CD8-positive, alpha-beta memory T cell (primary cell): ENCODE measurements at regions of chr2 and their contacts with region 1.

Region 1: DNA sequence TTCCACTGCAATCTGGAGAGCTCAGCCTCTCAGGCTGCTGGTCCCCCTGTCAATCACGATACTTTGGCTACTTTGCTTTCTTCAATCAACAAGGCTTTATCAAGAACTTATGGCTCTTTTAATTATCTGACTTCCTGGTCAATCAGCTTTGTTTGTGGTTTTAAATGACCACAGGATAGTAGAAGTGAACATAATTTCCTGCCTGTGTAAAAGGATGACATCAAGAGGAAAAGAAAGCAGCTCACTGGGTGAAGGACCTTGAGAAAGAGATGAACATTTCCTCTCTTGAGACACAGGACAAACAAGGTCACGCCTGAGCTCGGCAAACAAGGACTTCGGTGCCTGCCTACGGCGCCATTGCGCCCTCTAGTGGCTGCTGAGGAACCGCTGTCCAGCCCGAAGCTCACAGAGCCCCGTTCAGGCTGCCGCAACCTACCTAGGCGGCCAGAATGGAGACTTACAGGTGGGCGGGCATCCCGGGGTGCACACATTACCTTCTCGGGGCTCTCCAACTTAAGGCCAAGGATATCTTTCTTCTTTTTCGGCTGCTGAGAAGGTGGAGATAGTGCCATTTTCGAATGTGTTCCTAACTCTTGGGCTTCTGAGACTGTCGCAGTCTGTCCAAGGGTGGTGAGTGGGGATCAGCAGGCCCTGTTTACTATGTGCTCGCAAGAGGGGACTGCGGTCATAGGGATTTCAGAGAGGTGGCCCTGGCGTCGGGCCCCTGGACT is 54.0 kb downstream of the IL1RL2 start:
- DNase-seq: peak; percentile 72 to 89 (median 77)
- H3K4me3 ChIP-seq: no peak overlapping the region
- H3K4me3 Mint-ChIP-seq: peak overlapping the region in 6 of 7 donors; percentile 29 to 69 (median 36)
- H3K27ac ChIP-seq: no peak overlapping the region
- H3K27ac Mint-ChIP-seq: peak overlapping the region in 5 of 8 donors; percentile 38 to 84 (median 60)
- H3K4me1 ChIP-seq: peaks cover 9% of the 10 kb centered on the region
- H3K4me1 Mint-ChIP-seq: peaks cover 16 to 30% (median 26%) of the 10 kb centered on the region in 3 donors
- H3K27me3 ChIP-seq: no peaks in the 10 kb centered on the region
- H3K27me3 Mint-ChIP-seq: peaks cover 0 to 3% of the 10 kb centered on the region in 2 donors

Region 2: GRCh38 chr2:102005989-102006885 is 234.6 kb before region 1 on chr2:
- CTCF ChIA-PET with region 1: interaction called, 25 read pairs
- POLR2A ChIA-PET with region 1: no interaction called
- DNase-seq: no peak
- H3K4me3 ChIP-seq: no peak overlapping the region
- H3K4me3 Mint-ChIP-seq: no peak overlapping the region
- H3K27ac ChIP-seq: no peak overlapping the region
- H3K27ac Mint-ChIP-seq: no peak overlapping the region
- H3K4me1 ChIP-seq: peaks cover 9% of the 10 kb centered on the region
- H3K4me1 Mint-ChIP-seq: peaks cover 6 to 7% (median 6%) of the 10 kb centered on the region in 3 donors
- H3K27me3 ChIP-seq: no peaks in the 10 kb centered on the region
- H3K27me3 Mint-ChIP-seq: peaks cover 3 to 8% of the 10 kb centered on the region in 2 donors

Region 3: GRCh38 chr2:102033031-102033749 is 207.6 kb before region 1 on chr2:
- CTCF ChIA-PET with region 1: interaction called, 11 read pairs
- POLR2A ChIA-PET with region 1: no interaction called
- DNase-seq: no peak
- H3K4me3 ChIP-seq: no peak overlapping the region
- H3K4me3 Mint-ChIP-seq: peak overlapping the region in 4 of 7 donors; percentile 2 to 44 (median 24)
- H3K27ac ChIP-seq: no peak overlapping the region
- H3K27ac Mint-ChIP-seq: peak overlapping the region in 2 of 8 donors; percentile 9 to 38
- H3K4me1 ChIP-seq: peaks cover 19% of the 10 kb centered on the region
- H3K4me1 Mint-ChIP-seq: peaks cover 9 to 20% (median 19%) of the 10 kb centered on the region in 3 donors
- H3K27me3 ChIP-seq: no peaks in the 10 kb centered on the region
- H3K27me3 Mint-ChIP-seq: peaks cover 0 to 4% of the 10 kb centered on the region in 2 donors

Region 4: GRCh38 chr2:102172745-102173144 is 68.1 kb before region 1 on chr2:
- CTCF ChIA-PET with region 1: no interaction called
- POLR2A ChIA-PET with region 1: no interaction called
- DNase-seq: no peak
- H3K4me3 ChIP-seq: no peak overlapping the region
- H3K4me3 Mint-ChIP-seq: no peak overlapping the region
- H3K27ac ChIP-seq: no peak overlapping the region
- H3K27ac Mint-ChIP-seq: no peak overlapping the region
- H3K4me1 ChIP-seq: no peaks in the 10 kb centered on the region
- H3K4me1 Mint-ChIP-seq: no peaks in the 10 kb centered on the region
- H3K27me3 ChIP-seq: no peaks in the 10 kb centered on the region
- H3K27me3 Mint-ChIP-seq: peaks cover 6 to 9% of the 10 kb centered on the region in 2 donors

Region 5: GRCh38 chr2:102226612-102227391 is 14.0 kb before region 1 on chr2:
- CTCF ChIA-PET with region 1: interaction called, 17 read pairs
- POLR2A ChIA-PET with region 1: interaction called, 3 read pairs
- DNase-seq: no peak
- H3K4me3 ChIP-seq: no peak overlapping the region
- H3K4me3 Mint-ChIP-seq: peak overlapping the region in 1 of 7 donors; percentile 25
- H3K27ac ChIP-seq: peak overlapping the region; percentile 70
- H3K27ac Mint-ChIP-seq: peak overlapping the region; percentile 18 to 92 (median 70)
- H3K4me1 ChIP-seq: peaks cover 13% of the 10 kb centered on the region
- H3K4me1 Mint-ChIP-seq: peaks cover 10 to 26% (median 15%) of the 10 kb centered on the region in 3 donors
- H3K27me3 ChIP-seq: no peaks in the 10 kb centered on the region
- H3K27me3 Mint-ChIP-seq: peaks cover 3 to 6% of the 10 kb centered on the region in 2 donors

Region 6: DNA sequence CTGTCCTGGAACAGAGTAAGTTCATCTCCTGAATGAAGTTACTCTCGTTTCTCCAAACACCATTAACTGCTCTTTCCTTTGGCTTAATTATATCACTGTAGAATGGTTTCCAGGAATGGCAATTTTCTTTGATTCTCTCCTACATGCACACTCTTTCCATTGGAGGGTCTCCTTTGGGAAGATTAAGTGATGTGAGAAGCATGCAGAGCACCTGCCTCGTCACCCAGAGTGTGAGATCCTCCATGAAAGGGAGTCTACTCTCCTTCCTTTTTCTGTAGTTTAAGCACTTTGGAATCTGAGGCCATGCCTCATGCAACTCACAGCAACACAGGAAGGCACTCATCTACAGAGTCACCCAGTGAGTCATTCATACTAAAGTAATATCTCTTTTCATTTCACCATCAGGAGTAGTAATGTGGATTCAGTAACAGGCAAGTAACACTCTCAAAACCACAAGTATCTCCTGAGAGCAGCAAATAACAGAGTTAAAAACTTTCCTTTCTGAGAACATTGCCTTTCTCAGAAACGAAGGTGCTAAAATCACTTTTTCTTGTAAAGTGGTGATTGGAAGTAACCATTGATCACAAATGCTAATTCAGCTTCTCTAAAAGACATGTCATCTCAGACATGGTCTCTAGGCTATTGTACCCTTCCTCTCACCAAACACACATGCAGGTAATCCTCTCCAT is 17.7 kb after region 1 on chr2:
- CTCF ChIA-PET with region 1: interaction called, 31 read pairs
- POLR2A ChIA-PET with region 1: no interaction called
- DNase-seq: no peak
- H3K4me3 ChIP-seq: no peak overlapping the region
- H3K4me3 Mint-ChIP-seq: peak overlapping the region in 5 of 7 donors; percentile 17 to 79 (median 74)
- H3K27ac ChIP-seq: no peak overlapping the region
- H3K27ac Mint-ChIP-seq: peak overlapping the region; percentile 57 to 95 (median 84)
- H3K4me1 ChIP-seq: peaks cover 41% of the 10 kb centered on the region
- H3K4me1 Mint-ChIP-seq: peaks cover 45 to 49% (median 47%) of the 10 kb centered on the region in 3 donors
- H3K27me3 ChIP-seq: no peaks in the 10 kb centered on the region
- H3K27me3 Mint-ChIP-seq: no peaks in the 10 kb centered on the region

Region 7: GRCh38 chr2:102350137-102350793 is 109.5 kb after region 1 on chr2:
- CTCF ChIA-PET with region 1: interaction called, 16 read pairs
- POLR2A ChIA-PET with region 1: interaction called, 11 read pairs
- DNase-seq: no peak
- H3K4me3 ChIP-seq: no peak overlapping the region
- H3K4me3 Mint-ChIP-seq: no peak overlapping the region
- H3K27ac ChIP-seq: no peak overlapping the region
- H3K27ac Mint-ChIP-seq: peak overlapping the region in 1 of 8 donors; percentile 42
- H3K4me1 ChIP-seq: peaks cover 3% of the 10 kb centered on the region
- H3K4me1 Mint-ChIP-seq: peaks cover under 1 to 6% (median 3%) of the 10 kb centered on the region in 3 donors
- H3K27me3 ChIP-seq: no peaks in the 10 kb centered on the region
- H3K27me3 Mint-ChIP-seq: peaks cover 2 to 6% of the 10 kb centered on the region in 2 donors

Region 8: DNA sequence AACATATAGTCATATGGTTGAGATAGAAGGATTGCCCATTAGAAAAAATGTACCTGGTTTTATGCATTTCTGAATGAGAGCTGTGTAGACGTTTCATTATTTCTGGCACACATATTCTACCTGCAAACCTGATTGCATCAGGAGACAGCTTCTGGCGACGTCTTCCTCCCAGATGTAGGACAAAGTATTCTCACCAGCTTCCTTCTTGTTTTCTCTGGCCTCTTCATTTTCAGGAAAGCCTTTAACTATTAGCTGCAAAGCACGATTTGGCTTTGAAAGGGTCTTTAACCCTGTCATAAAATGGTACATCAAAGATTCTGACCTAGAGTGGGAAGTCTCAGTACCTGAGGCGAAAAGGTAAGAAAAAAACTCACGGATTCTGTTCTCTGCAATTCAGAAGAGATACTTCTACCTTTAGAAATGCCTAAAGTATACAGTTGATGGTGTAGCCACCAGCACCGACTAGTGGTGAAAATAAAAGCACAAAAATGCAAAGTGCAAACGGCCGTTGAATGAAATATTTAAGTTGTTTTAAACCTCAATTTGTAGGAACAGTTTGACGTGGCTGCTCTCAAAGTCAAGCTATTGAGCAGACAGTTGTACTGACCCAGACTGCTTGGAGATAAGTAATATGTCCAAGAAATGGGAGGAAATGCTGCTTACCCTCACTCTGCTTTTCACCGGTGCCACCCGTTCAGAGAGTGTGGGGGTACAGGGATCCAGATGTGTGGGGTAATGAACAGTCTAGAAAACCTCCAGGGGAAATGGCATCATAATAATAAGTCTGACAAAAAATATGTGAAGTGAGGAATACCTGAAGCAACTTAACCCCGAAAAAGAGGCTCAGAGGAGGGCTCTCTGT is 202.4 kb after region 1 on chr2:
- CTCF ChIA-PET with region 1: interaction called, 31 read pairs
- POLR2A ChIA-PET with region 1: no interaction called
- DNase-seq: peak in 4 of 5 donors; percentile 17 to 51 (median 40)
- H3K4me3 ChIP-seq: no peak overlapping the region
- H3K4me3 Mint-ChIP-seq: peak overlapping the region in 5 of 7 donors; percentile 23 to 62 (median 45)
- H3K27ac ChIP-seq: no peak overlapping the region
- H3K27ac Mint-ChIP-seq: peak overlapping the region; percentile 0 to 83 (median 42)
- H3K4me1 ChIP-seq: peaks cover 6% of the 10 kb centered on the region
- H3K4me1 Mint-ChIP-seq: peaks cover 6 to 18% (median 8%) of the 10 kb centered on the region in 3 donors
- H3K27me3 ChIP-seq: no peaks in the 10 kb centered on the region
- H3K27me3 Mint-ChIP-seq: no peaks in the 10 kb centered on the region